Ovary (tissue), 10 donors: ENCODE measurements at regions of chr17 and their contacts with region 1.

Region 1: GRCh38 chr17:68539548-68540467 is 27.6 kb downstream of the PRKAR1A start:
- DNase-seq: peak in 2 of 5 donors; percentile 31 to 39
- H3K4me3 ChIP-seq: no peak overlapping the region
- H3K27ac ChIP-seq: no peak overlapping the region
- H3K4me1 ChIP-seq: no peaks in the 10 kb centered on the region
- H3K27me3 ChIP-seq: no peaks in the 10 kb centered on the region
- CTCF ChIP-seq: peak in 2 of 3 donors; percentile 27 to 33
- EP300 ChIP-seq: no peak
- POLR2A ChIP-seq: no peak

Region 2: GRCh38 chr17:68327823-68328570 is 211.8 kb before region 1 on chr17:
- intact Hi-C with region 1: no loop called
- DNase-seq: no peak
- H3K4me3 ChIP-seq: no peak overlapping the region
- H3K27ac ChIP-seq: no peak overlapping the region
- H3K4me1 ChIP-seq: no peaks in the 10 kb centered on the region
- H3K27me3 ChIP-seq: no peaks in the 10 kb centered on the region
- CTCF ChIP-seq: no peak
- EP300 ChIP-seq: no peak
- POLR2A ChIP-seq: no peak

Region 3: DNA sequence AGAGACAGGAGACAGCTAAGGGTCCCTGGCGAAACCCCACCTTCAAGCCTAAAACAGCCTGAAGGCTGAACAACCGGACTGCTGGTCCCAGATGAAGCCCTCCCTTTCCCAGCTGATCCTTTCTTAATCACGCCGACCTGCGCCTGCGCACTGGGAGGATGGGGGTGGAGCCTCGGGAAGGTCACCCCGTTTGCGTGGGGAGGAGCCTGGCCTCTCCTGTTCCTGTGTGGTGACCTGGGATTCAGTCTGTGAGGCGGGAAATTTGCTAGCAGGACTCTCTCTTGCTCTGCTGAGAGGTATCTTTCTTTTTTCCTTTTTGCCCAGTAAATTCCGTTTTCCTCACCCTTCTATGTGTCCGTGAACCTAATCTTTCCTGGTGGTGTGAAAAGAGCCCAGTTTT is 51.8 kb after region 1 on chr17:
- intact Hi-C with region 1: loop called in 1 of 4 experiments (anchors 10 kb)
- DNase-seq: peak; percentile 40 to 81 (median 67)
- H3K4me3 ChIP-seq: no peak overlapping the region
- H3K27ac ChIP-seq: no peak overlapping the region
- H3K4me1 ChIP-seq: peaks cover 2% of the 10 kb centered on the region
- H3K27me3 ChIP-seq: no peaks in the 10 kb centered on the region
- CTCF ChIP-seq: no peak
- EP300 ChIP-seq: no peak
- POLR2A ChIP-seq: no peak

Region 4: DNA sequence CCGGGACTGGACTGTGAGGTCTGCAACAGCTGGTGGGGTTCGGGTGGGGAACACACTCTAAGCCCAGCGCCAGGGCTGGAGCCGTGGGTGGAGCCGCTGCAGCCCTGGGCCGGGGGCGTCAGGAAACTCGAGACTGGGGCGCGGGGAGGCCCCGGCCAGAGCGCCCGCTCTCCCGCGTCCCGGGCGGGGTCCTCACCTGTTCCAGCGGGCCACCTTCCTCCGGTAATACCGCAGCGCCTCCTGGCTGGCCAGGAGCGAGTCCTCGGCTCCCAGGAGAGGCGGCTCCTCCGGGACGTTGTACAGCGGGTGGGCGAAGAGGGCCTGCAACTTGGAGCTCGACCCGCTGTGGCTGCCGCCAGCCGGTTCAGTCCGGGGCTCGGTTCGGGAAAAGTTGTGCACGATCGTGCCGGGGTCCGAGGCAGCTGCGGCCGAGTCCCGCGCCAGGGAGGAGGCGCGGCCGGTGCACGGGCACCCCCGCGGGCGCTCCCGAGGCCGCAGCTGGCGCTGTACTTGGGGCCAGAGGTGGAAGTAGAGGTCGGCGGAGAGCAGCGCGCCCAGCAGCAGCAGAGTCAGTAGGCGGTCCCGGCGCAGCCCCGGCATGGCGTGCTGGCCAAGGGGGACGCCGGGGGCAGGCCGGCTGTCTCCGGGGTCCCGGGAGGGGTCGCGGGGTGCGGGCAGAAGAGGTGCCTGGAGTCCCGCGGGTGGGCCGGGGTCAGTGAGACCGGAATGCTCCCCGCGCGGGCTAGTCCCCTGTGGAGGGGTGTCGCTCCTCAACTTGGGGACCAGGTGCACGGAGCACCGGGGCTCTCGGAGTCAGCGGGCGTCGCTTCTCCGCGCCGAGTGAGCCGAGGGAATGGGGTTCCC is 60.5 kb after region 1 on chr17:
- intact Hi-C with region 1: loop called in 2 of 4 experiments (anchors 5 to 10 kb)
- DNase-seq: peak; percentile 67 to 74 (median 69)
- H3K4me3 ChIP-seq: peak overlapping the region; percentile 70
- H3K27ac ChIP-seq: peak overlapping the region; percentile 54 to 63
- H3K4me1 ChIP-seq: peaks cover 5% of the 10 kb centered on the region
- H3K27me3 ChIP-seq: no peaks in the 10 kb centered on the region
- CTCF ChIP-seq: peak; percentile 15 to 50 (median 43)
- EP300 ChIP-seq: no peak
- POLR2A ChIP-seq: no peak

Region 5: GRCh38 chr17:68684949-68685357 is 145.1 kb after region 1 on chr17:
- intact Hi-C with region 1: no loop called
- DNase-seq: peak in 2 of 5 donors; percentile 31 to 44
- H3K4me3 ChIP-seq: no peak overlapping the region
- H3K27ac ChIP-seq: peak overlapping the region in 1 of 2 donors; percentile 67
- H3K4me1 ChIP-seq: peaks cover 10% of the 10 kb centered on the region
- H3K27me3 ChIP-seq: no peaks in the 10 kb centered on the region
- CTCF ChIP-seq: no peak
- EP300 ChIP-seq: no peak
- POLR2A ChIP-seq: no peak

Region 6: DNA sequence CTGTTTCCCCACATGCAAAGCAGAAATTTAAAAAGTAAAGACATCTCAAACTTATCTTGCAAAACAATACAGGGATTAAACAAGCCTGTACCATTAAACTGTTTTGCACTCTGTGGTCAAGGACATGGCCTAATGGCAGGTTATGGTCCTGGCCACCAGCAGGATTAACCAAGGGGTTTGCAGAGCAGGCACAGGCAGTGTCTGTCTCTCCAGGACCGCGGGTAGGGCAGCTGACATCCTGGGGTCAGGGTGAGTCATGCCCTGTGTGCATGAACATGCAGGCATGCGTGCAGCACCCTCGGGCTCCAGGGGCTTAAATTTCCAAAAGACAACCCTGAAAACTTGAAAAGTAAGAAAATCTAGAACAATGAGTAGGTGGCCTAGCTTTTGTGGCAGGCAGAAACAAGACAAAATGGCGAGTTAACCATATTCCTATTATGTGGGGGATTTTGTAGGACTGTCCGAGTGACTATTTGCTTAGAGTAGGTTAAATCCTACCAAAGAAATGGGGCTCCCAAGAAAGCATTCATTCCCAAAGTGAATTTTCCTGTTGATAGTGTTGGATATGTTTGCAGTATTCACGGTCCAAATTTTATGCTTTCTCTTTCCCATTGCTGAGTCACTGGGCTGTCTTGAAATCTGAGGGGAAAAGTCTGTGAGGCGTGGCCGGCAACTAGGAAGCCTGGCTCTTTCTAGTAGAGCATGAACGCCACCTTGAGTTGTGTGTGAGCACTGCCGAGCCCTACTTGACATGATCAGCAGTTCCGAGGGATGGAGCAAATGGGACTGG is 219.7 kb after region 1 on chr17:
- intact Hi-C with region 1: loop called in 3 of 4 experiments (anchors 5 to 10 kb)
- DNase-seq: peak; percentile 86 to 94 (median 89)
- H3K4me3 ChIP-seq: peak overlapping the region; percentile 14
- H3K27ac ChIP-seq: peak overlapping the region in 1 of 2 donors; percentile 73
- H3K4me1 ChIP-seq: peaks cover 2% of the 10 kb centered on the region
- H3K27me3 ChIP-seq: no peaks in the 10 kb centered on the region
- CTCF ChIP-seq: peak; percentile 48 to 94 (median 92)
- EP300 ChIP-seq: no peak
- POLR2A ChIP-seq: no peak